HCT116 (cell line): ENCODE measurements at regions of chr2 and their contacts with region 1.

Region 1: GRCh38 chr2:109597283-109597682 is 16.5 kb downstream of the SEPTIN10 start:
- DNase-seq: no peak
- ATAC-seq: no peak
- H3K4me3 ChIP-seq: no peak overlapping the region
- H3K27ac ChIP-seq: no peak overlapping the region
- H3K4me1 ChIP-seq: no peaks in the 10 kb centered on the region
- H3K27me3 ChIP-seq: no peaks in the 10 kb centered on the region
- CTCF ChIP-seq: no peak
- POLR2A ChIP-seq: no peak
- RAD21 ChIP-seq: no peak

Region 2: DNA sequence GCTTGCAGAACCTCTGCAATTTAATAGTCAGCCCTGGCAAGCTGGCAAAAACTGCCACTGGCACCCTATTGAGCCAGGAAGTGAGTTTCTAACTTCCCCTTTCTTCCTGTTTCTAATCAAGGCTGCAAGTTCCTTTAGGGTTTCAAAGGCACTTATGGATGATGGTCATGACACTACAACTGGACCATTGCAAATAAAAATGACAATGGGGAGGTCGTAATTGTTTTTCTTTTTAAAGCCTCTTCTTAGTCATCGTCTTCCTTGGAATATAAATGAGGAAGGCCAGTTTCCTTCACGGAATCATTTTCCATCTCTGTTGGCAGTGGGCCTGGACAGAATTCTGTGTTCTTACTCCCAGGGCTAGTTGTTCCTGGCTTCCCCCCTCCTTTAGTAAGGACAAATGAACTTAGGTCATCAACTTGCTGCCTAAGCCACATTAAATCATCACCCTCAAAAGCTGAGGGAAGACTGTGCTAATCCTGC is 432.5 kb before region 1 on chr2:
- CTCF ChIA-PET with region 1: no interaction called
- POLR2A ChIA-PET with region 1: no interaction called
- RAD21 ChIA-PET with region 1: no interaction called
- intact Hi-C with region 1: no loop called
- DNase-seq: no peak
- ATAC-seq: no peak
- H3K4me3 ChIP-seq: no peak overlapping the region
- H3K27ac ChIP-seq: no peak overlapping the region
- H3K4me1 ChIP-seq: no peaks in the 10 kb centered on the region
- H3K27me3 ChIP-seq: peaks cover 31% of the 10 kb centered on the region; the same call in 1 of the 2 replicates
- CTCF ChIP-seq: no peak
- POLR2A ChIP-seq: no peak
- RAD21 ChIP-seq: no peak

Region 3: DNA sequence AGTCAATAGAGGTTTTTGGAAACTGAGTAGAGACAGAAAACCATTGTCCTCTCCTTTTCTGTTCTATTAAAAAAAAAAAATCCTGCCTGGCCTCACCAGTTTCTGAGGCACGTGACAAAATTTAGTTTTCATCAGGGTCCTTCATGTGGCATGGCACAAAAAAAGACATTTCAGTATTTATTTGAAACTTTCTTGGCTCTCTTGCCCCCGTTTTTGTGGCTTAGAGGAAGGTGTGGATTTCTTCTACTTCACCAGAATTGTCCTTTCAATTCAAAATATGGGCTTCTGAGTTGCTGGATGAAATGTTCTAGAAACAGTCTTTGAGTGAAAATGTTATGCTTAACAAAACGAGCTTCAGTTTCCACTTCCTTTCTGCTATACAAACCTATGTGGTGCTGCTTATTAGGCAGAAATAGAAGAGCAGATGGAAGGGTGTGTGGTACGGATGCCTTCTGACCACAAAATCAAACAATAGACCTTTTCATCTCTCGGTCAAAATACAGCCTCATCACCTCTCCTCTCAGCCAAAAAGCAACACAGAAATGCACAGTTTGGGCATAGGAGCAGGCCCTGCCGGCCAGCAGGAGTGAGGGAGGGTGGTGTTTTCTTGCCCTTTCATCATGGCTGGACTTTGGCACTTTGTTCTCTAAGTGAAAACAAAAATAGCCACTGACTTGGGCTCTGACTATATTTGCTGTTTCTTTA is 379.0 kb before region 1 on chr2:
- CTCF ChIA-PET with region 1: no interaction called
- POLR2A ChIA-PET with region 1: no interaction called
- RAD21 ChIA-PET with region 1: no interaction called
- intact Hi-C with region 1: no loop called
- DNase-seq: no peak
- ATAC-seq: no peak
- H3K4me3 ChIP-seq: no peak overlapping the region
- H3K27ac ChIP-seq: no peak overlapping the region
- H3K4me1 ChIP-seq: peaks cover 8 to 10% of the 10 kb centered on the region in 2 experiments; a peak in 3 of 4 replicates
- H3K27me3 ChIP-seq: peaks cover 12% of the 10 kb centered on the region; the same call in 1 of the 2 replicates
- CTCF ChIP-seq: no peak
- POLR2A ChIP-seq: no peak
- RAD21 ChIP-seq: no peak

Region 4: GRCh38 chr2:109560265-109560664 is 37.0 kb before region 1 on chr2:
- CTCF ChIA-PET with region 1: no interaction called
- POLR2A ChIA-PET with region 1: no interaction called
- RAD21 ChIA-PET with region 1: no interaction called
- intact Hi-C with region 1: loop called (anchors 5 kb)
- DNase-seq: no peak
- ATAC-seq: no peak
- H3K4me3 ChIP-seq: no peak overlapping the region
- H3K27ac ChIP-seq: 0 out of 2 replicates have a peak overlapping the region, but pooled peaks have one; percentile 4
- H3K4me1 ChIP-seq: peaks cover 14 to 54% of the 10 kb centered on the region in 2 experiments
- H3K27me3 ChIP-seq: no peaks in the 10 kb centered on the region
- CTCF ChIP-seq: no peak
- POLR2A ChIP-seq: no peak
- RAD21 ChIP-seq: no peak